Spleen (tissue), 13 donors: ENCODE measurements at regions of chr22 and their contacts with region 1.

Region 1: GRCh38 chr22:39532215-39533071 is at the start of gene RPS19BP1:
- DNase-seq: peak; percentile 100
- H3K4me3 ChIP-seq: peak within 1 kb of the TSS; percentile 59 to 87 (median 72)
- H3K27ac ChIP-seq: peak within 1 kb of the TSS; percentile 81 to 99 (median 93)
- H3K4me1 ChIP-seq: peaks cover 51 to 75% (median 66%) of the 10 kb centered on the region in 6 donors
- H3K27me3 ChIP-seq: no peaks in the 10 kb centered on the region
- CTCF ChIP-seq: peak in 4 of 11 experiments; percentile 3 to 25 (median 19)
- POLR2A ChIP-seq: peak in 1 of 3 donors; percentile 72
- total RNA-seq, gene RPS19BP1: 55.8 to 147 (median 57.3) TPM

Region 2: DNA sequence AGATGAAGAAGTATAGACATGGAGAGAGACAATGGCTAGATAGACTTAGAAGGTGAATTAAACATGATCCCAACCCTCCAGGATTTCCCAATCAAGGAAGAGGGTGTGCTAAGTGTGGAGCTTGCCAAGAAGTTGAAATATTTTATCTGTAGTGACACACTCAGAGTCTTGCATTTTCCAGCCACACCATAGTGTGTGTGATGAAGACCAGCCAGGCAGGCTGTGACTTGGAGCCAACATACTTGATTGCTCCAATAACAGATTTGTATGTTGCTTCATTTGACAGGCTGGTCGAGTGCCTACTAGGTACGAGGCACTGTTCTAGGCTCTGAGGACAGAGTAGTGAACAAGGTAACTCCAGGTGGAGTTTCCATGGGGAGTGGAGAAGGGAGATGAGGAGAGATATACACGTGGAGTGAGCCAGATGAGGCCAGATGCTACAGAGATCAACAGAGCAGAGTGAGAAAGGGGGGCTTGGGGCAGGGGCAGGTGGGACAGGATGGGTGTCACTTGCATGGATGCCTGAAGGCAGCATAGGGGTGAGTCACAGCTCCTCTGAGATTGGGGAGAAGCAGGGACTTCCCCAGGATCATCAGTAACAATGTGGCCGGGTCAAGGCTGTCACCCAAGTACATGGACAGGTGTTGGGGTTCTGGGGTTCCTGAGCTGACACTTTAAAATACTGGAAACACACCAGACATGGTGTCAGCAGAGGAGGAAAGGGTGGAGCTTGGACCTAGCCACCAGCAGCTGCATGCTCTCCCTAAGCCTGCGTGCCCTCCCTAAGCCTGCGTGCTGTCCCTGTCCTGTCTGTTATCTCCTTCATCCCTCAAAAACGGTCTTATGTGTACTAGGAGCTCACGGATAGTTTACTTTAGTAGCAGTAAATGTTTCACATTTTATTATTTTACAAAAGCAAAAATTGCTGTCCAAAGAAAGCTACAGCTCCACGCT is 311.3 kb before region 1 on chr22:
- intact Hi-C with region 1: no loop called
- DNase-seq: peak; percentile 44
- H3K4me3 ChIP-seq: no peak overlapping the region
- H3K27ac ChIP-seq: no peak overlapping the region
- H3K4me1 ChIP-seq: peaks cover 0 to 8% (median 0%) of the 10 kb centered on the region in 6 donors
- H3K27me3 ChIP-seq: peaks cover 0 to 49% (median 0%) of the 10 kb centered on the region in 7 donors
- CTCF ChIP-seq: no peak
- POLR2A ChIP-seq: no peak

Region 3: GRCh38 chr22:39360674-39361413 is 171.6 kb before region 1 on chr22:
- intact Hi-C with region 1: no loop called
- DNase-seq: no peak
- H3K4me3 ChIP-seq: no peak overlapping the region
- H3K27ac ChIP-seq: no peak overlapping the region
- H3K4me1 ChIP-seq: peaks cover 0 to 26% (median 10%) of the 10 kb centered on the region in 6 donors
- H3K27me3 ChIP-seq: no peaks in the 10 kb centered on the region
- CTCF ChIP-seq: no peak
- POLR2A ChIP-seq: no peak

Region 4: GRCh38 chr22:39490135-39490798 is 42.2 kb before region 1 on chr22:
- intact Hi-C with region 1: loop called (anchors 5 kb)
- DNase-seq: peak; percentile 97
- H3K4me3 ChIP-seq: peak overlapping the region in 1 of 8 donors; percentile 45
- H3K27ac ChIP-seq: peak overlapping the region in 3 of 8 donors; percentile 19 to 57 (median 41)
- H3K4me1 ChIP-seq: peaks cover 6 to 38% (median 11%) of the 10 kb centered on the region in 6 donors
- H3K27me3 ChIP-seq: no peaks in the 10 kb centered on the region
- CTCF ChIP-seq: no peak
- POLR2A ChIP-seq: no peak

Region 5: GRCh38 chr22:39655004-39655579 is 122.6 kb after region 1 on chr22:
- intact Hi-C with region 1: no loop called
- DNase-seq: no peak
- H3K4me3 ChIP-seq: no peak overlapping the region
- H3K27ac ChIP-seq: no peak overlapping the region
- H3K4me1 ChIP-seq: no peaks in the 10 kb centered on the region
- H3K27me3 ChIP-seq: peaks cover 0 to 54% (median 8%) of the 10 kb centered on the region in 7 donors
- CTCF ChIP-seq: no peak
- POLR2A ChIP-seq: no peak

Region 6: DNA sequence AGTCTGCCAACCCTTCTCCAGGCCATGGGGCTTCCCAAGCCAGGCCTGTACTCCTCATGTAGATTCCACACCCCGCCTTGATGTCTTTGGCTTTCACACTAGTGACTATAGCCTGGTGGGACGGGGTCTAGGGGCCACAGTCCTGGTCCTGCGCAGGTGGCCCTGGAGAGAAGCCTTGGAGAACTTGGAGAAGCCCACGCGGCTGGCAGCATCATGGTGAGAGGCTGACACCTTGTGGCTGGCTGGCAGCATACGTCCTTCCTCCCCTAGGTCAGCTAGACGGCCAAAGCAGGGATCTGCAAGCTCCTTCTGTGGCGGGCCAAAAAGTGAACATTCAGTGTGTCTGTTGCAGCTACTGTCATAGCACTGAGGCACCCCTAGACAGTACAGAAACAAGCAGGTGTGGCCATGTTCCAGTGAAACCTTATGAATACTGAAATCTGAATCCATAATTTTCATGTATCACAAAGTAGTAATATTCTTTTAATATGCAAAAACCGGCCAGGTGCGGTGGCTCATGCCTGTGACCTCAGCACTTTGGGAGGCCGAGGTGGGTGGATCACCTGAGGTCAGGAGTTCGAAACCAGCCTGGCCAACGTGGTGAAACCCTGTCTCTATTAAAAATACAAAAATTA is 504.3 kb after region 1 on chr22:
- intact Hi-C with region 1: loop called (anchors 5 kb)
- DNase-seq: peak; percentile 84
- H3K4me3 ChIP-seq: no peak overlapping the region
- H3K27ac ChIP-seq: no peak overlapping the region
- H3K4me1 ChIP-seq: peaks cover 0 to 33% (median 2%) of the 10 kb centered on the region in 6 donors
- H3K27me3 ChIP-seq: peaks cover 0 to 55% (median 0%) of the 10 kb centered on the region in 7 donors
- CTCF ChIP-seq: peak; percentile 37 to 77 (median 66)
- POLR2A ChIP-seq: no peak